ENCODE measurements at regions of chr1 and their contacts with region 1.

Region 1: DNA sequence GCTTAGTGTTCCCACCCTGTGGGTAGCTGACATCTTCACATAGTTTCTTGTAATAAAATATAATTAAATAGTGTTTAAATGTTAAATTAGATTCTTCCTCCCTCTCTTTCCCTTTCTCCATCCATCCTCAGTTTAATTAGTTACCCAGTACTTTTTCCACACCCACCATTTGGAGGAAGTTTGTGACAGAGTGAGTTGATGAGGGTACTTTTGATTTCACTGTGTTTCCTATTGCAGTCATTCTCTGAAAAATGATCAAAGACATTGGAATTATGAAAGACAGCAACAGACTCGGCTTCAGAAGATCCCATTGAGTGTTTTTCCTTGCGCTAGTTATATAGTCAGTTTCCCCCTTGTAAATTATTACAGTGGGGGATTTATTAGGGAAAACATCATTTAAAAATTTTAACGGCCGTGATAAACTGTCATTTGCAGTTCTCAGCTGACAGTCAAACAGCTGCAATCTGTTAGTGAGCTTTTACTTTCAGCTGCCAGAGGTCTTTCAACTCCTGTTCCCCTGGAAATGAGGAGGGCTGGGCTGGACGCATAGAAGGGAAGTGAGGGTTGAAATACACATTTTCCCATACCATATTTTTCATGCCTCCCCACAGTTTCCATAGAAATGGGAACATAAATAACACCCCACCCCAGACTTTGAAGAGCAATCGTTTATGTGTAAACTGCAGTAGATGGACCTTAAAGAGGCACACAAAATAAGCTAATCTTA is 61.3 kb upstream of the CACYBP start:
- DNase-seq: peak in 1 of 14 experiments; percentile 21
- ATAC-seq: peak; percentile 24
- H3K4me3 ChIP-seq: no peak overlapping the region
- H3K4me3 Mint-ChIP-seq: peak overlapping the region; percentile 5
- H3K27ac ChIP-seq: no peak overlapping the region
- H3K27ac Mint-ChIP-seq: peak overlapping the region; percentile 50
- H3K4me1 ChIP-seq: no peaks in the 10 kb centered on the region
- H3K4me1 Mint-ChIP-seq: peaks cover 30% of the 10 kb centered on the region
- H3K27me3 ChIP-seq: no peaks in the 10 kb centered on the region
- H3K27me3 Mint-ChIP-seq: no peaks in the 10 kb centered on the region
- CTCF ChIP-seq: no peak

Region 2: GRCh38 chr1:174976436-174977108 is 38.1 kb after region 1 on chr1:
- CTCF ChIA-PET with region 1: interaction called, 3 read pairs
- POLR2A ChIA-PET with region 1: no interaction called
- intact Hi-C with region 1: loop called in 1 of 2 experiments (anchors 5 kb)
- DNase-seq: peak in 1 of 14 experiments; percentile 31
- ATAC-seq: no peak
- H3K4me3 ChIP-seq: no peak overlapping the region
- H3K4me3 Mint-ChIP-seq: no peak overlapping the region
- H3K27ac ChIP-seq: no peak overlapping the region
- H3K27ac Mint-ChIP-seq: no peak overlapping the region
- H3K4me1 ChIP-seq: peaks cover 16% of the 10 kb centered on the region
- H3K4me1 Mint-ChIP-seq: peaks cover 47% of the 10 kb centered on the region
- H3K27me3 ChIP-seq: no peaks in the 10 kb centered on the region
- H3K27me3 Mint-ChIP-seq: no peaks in the 10 kb centered on the region
- CTCF ChIP-seq: no peak

Region 3: GRCh38 chr1:175217721-175218531 is 279.5 kb after region 1 on chr1:
- CTCF ChIA-PET with region 1: no interaction called
- POLR2A ChIA-PET with region 1: no interaction called
- intact Hi-C with region 1: no loop called
- DNase-seq: no peak
- ATAC-seq: no peak
- H3K4me3 ChIP-seq: no peak overlapping the region
- H3K4me3 Mint-ChIP-seq: no peak overlapping the region
- H3K27ac ChIP-seq: no peak overlapping the region
- H3K27ac Mint-ChIP-seq: no peak overlapping the region
- H3K4me1 ChIP-seq: no peaks in the 10 kb centered on the region
- H3K4me1 Mint-ChIP-seq: peaks cover 32% of the 10 kb centered on the region
- H3K27me3 ChIP-seq: no peaks in the 10 kb centered on the region
- H3K27me3 Mint-ChIP-seq: no peaks in the 10 kb centered on the region
- CTCF ChIP-seq: no peak

Measured in CD4-positive, alpha-beta T cell (primary cell).